ENCODE measurements at regions of chr12 and their contacts with region 1.

Region 1: GRCh38 chr12:42325653-42326474 is at the starts of genes PPHLN1 and ZCRB1:
- DNase-seq: peak; percentile 82
- CTCF ChIP-seq: no peak

Region 2: DNA sequence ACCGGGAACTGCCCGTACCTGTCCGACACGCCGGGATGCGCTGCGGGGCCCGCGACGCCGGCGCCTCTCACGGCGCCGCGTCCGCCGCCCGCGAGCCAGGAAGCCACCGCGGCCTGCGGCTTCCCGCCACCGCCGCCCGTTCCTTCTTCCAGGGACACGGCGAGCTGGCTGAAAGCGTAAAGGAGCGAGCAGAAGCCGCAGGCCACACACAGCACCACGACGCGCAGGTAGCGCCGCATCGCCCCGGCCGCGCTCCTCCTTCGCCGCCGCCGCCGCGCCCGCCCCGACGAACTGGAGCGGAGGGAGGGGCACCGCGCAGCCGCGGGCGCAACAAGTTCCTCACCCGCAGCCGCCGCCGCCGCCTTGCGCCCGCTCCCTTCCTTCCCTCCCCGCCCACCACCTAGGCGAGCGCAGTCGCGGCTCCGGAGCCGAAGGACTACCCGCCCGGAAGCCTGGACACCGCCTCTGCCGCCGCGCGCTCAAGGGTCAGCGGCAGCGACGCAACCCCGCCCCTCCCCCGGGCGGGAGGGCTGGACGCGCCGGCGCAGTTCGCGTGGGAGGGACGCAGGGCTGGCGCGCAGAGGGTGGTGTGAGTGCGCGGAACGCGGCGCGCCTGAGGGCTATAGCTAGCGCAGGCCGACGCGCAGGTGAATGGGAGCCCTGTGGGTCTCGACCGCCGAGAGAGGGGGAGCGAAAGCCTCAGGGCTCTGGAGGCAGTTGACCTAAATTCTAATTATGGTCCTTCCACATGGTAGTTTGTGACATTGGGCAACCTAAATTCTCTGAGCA is 181.3 kb before region 1 on chr12 and contains the start of gene GXYLT1:
- in situ Hi-C with region 1: loop called (anchors 25 kb)
- DNase-seq: peak; percentile 96
- CTCF ChIP-seq: no peak

Measured in GM13977 (cell line).